ENCODE measurements at regions of chr12 and their contacts with region 1.

Region 1: GRCh38 chr12:46661110-46661845 is 164.5 kb downstream of the SLC38A4 start:
- DNase-seq: no peak
- ATAC-seq: peak; percentile 88
- H3K4me3 ChIP-seq: no peak overlapping the region
- H3K27ac ChIP-seq: no peak overlapping the region
- H3K4me1 ChIP-seq: peaks cover 2 to 6% of the 10 kb centered on the region in 2 donors
- H3K27me3 ChIP-seq: no peaks in the 10 kb centered on the region

Region 2: GRCh38 chr12:46124848-46125619 is 536.2 kb before region 1 on chr12:
- intact Hi-C with region 1: loop called in 1 of 2 experiments (anchors 10 kb)
- DNase-seq: no peak
- ATAC-seq: peak; percentile 92
- H3K4me3 ChIP-seq: no peak overlapping the region
- H3K27ac ChIP-seq: no peak overlapping the region
- H3K4me1 ChIP-seq: no peaks in the 10 kb centered on the region
- H3K27me3 ChIP-seq: no peaks in the 10 kb centered on the region

Region 3: GRCh38 chr12:46292755-46293402 is 368.4 kb before region 1 on chr12:
- intact Hi-C with region 1: loop called in 1 of 2 experiments (anchors 10 kb)
- DNase-seq: no peak
- ATAC-seq: no peak
- H3K4me3 ChIP-seq: no peak overlapping the region
- H3K27ac ChIP-seq: no peak overlapping the region
- H3K4me1 ChIP-seq: no peaks in the 10 kb centered on the region
- H3K27me3 ChIP-seq: no peaks in the 10 kb centered on the region

Region 4: DNA sequence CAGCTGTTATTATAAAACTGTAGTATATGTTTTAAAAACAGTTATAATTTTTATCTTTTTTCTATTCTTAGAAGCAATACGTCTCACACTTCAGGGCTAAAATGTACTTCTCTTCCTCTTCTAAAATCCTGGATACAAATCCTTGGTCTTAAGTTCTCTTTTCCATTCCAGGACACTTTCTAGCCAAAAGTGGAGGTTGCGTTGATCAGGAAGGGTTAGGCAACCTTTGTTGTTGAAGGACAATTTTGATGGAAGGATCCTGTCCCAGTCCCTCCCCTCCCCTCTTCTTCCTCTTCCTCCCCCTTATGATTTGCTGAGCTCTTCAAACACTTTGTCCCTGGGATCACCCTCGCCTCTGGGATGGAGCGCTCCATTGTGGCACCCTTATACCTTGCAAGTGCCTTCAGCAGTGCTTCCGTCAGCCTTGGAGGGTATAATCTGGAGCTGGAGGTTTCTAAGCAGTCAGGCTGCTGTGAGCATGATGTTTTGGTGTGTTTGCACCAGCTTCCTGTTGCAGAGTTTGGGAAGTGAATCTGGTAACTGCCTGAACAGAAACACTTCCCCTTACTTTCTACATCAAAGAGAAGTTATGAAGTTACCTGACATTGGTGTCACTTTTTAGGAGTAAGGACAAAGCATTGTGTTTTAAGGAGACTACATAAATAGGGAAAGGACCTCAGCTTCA is 201.3 kb before region 1 on chr12:
- intact Hi-C with region 1: loop called in 1 of 2 experiments (anchors 10 kb)
- DNase-seq: no peak
- ATAC-seq: no peak
- H3K4me3 ChIP-seq: no peak overlapping the region
- H3K27ac ChIP-seq: peak overlapping the region; percentile 47 to 67
- H3K4me1 ChIP-seq: peaks cover 8 to 25% of the 10 kb centered on the region in 2 donors
- H3K27me3 ChIP-seq: no peaks in the 10 kb centered on the region

Region 5: DNA sequence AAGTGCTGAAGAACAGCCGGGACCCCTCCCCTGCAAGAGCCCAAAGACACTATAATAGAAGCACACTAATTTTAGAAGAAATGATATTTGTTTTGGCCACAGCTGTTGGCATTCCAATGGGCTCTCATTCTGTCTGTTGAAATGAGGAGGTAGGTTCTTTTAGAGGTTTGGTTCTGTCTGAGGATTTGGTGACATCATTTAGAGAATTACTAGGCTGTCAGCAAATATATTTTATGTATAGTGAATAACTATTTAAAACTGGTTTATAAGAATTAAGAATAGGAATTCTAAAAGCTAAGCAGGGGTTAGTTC is 88.0 kb before region 1 on chr12:
- intact Hi-C with region 1: loop called (anchors 10 kb)
- DNase-seq: no peak
- ATAC-seq: peak; percentile 33
- H3K4me3 ChIP-seq: no peak overlapping the region
- H3K27ac ChIP-seq: no peak overlapping the region
- H3K4me1 ChIP-seq: peaks cover 0 to 11% of the 10 kb centered on the region in 2 donors
- H3K27me3 ChIP-seq: no peaks in the 10 kb centered on the region

Region 6: GRCh38 chr12:46693034-46693433 is 31.8 kb after region 1 on chr12:
- intact Hi-C with region 1: no loop called
- DNase-seq: no peak
- ATAC-seq: no peak
- H3K4me3 ChIP-seq: no peak overlapping the region
- H3K27ac ChIP-seq: no peak overlapping the region
- H3K4me1 ChIP-seq: no peaks in the 10 kb centered on the region
- H3K27me3 ChIP-seq: no peaks in the 10 kb centered on the region

Region 7: GRCh38 chr12:46722394-46723185 is 61.3 kb after region 1 on chr12:
- intact Hi-C with region 1: no loop called
- DNase-seq: no peak
- ATAC-seq: no peak
- H3K4me3 ChIP-seq: no peak overlapping the region
- H3K27ac ChIP-seq: no peak overlapping the region
- H3K4me1 ChIP-seq: peaks cover 0 to 2% of the 10 kb centered on the region in 2 donors
- H3K27me3 ChIP-seq: no peaks in the 10 kb centered on the region

Region 8: GRCh38 chr12:47111392-47111778 is 450.1 kb after region 1 on chr12:
- intact Hi-C with region 1: no loop called
- DNase-seq: no peak
- ATAC-seq: no peak
- H3K4me3 ChIP-seq: no peak overlapping the region
- H3K27ac ChIP-seq: no peak overlapping the region
- H3K4me1 ChIP-seq: peaks cover 0 to 2% of the 10 kb centered on the region in 2 donors
- H3K27me3 ChIP-seq: no peaks in the 10 kb centered on the region